Dorsolateral prefrontal cortex (tissue), 120 donors: ENCODE measurements at regions of chr18 and their contacts with region 1.

Region 1: DNA sequence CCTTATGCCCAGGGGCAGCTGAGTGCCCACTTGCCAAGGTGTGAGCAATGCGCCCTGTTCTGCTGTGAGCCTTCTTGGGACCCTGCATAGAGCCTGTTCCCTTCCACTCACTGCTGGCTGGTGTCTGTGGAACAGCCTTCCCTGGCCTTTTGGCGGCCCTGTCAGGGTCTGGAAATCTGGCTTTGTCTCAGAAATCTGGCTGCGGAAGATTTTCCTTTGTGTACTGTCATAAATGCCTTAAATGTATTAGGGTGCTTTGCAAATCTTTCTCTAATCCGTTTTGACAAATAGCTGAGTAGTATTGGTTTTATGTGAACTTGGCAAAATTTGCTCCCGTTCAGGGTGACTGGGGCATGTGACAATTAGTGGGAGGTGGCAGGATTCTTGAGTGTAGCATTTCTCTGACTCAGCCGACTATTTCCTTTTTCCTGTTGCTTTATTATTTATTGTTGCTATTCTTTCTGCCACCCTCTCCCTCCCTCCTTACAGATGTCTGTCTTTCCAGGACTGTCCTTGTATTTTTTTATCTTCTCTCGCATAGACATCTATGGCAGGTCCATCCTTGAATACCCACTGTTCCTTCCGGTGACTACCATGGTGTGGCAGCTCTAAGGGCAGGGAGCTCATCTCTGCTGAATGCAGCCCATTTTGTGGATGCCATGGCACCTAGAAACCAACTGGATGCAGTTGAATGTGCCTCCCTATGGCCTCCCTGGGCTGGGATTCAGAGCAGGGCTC is 41.8 kb downstream of the LDLRAD4 start:
- DNase-seq: peak in 1 of 10 donors; percentile 8
- H3K4me3 ChIP-seq: no peak overlapping the region
- H3K27ac ChIP-seq: peak overlapping the region in 22 of 59 donors; percentile 3 to 78 (median 32)
- H3K27me3 ChIP-seq: no peaks in the 10 kb centered on the region
- CTCF ChIP-seq: no peak

Region 2: GRCh38 chr18:12882453-12883371 is 377.7 kb before region 1 on chr18:
- intact Hi-C with region 1: no loop called
- DNase-seq: no peak
- H3K4me3 ChIP-seq: peak overlapping the region; percentile 66 to 99 (median 85)
- H3K27ac ChIP-seq: peak overlapping the region; percentile 94 to 100 (median 100)
- H3K27me3 ChIP-seq: no peaks in the 10 kb centered on the region
- CTCF ChIP-seq: no peak

Region 3: DNA sequence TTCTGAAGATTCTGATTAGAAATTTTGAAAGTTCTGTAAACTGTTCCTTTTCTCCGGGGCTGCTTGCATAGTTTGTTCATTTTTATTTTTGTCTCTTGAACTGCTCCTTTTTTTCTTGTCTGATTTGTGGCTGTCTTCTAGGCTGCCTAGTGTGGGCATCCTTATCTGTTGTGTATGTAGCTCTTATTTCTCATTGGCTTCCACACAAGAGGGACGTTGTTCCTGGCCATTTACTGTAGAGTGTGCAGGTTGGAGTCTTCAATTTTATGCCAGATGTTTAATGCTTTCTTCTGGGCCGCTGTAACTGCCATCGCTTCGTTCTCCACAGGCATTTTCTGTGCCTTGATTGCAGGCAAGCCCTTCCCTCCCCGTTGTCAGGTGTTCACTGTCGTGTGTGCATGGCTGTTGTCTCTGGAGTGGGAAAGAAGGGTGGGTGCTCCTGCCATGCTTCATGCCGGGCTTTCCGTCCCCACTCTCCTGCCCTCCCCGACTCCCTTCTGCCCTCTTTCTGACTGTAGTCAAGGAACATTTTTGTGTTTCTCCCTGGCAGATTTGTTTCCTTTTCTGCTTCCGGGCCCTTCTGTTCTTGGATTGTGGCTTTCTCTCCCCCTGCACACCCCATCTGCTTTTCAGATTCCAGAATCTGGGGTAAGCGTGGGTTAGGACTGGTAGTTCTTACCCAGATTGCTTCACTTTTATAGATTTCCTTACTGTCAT is 253.7 kb before region 1 on chr18:
- intact Hi-C with region 1: no loop called
- DNase-seq: peak in 2 of 10 donors; percentile 30 to 38
- H3K4me3 ChIP-seq: peak overlapping the region in 3 of 59 donors; percentile 13 to 23 (median 14)
- H3K27ac ChIP-seq: peak overlapping the region in 34 of 59 donors; percentile 1 to 68 (median 39)
- H3K27me3 ChIP-seq: no peaks in the 10 kb centered on the region
- CTCF ChIP-seq: no peak

Region 4: DNA sequence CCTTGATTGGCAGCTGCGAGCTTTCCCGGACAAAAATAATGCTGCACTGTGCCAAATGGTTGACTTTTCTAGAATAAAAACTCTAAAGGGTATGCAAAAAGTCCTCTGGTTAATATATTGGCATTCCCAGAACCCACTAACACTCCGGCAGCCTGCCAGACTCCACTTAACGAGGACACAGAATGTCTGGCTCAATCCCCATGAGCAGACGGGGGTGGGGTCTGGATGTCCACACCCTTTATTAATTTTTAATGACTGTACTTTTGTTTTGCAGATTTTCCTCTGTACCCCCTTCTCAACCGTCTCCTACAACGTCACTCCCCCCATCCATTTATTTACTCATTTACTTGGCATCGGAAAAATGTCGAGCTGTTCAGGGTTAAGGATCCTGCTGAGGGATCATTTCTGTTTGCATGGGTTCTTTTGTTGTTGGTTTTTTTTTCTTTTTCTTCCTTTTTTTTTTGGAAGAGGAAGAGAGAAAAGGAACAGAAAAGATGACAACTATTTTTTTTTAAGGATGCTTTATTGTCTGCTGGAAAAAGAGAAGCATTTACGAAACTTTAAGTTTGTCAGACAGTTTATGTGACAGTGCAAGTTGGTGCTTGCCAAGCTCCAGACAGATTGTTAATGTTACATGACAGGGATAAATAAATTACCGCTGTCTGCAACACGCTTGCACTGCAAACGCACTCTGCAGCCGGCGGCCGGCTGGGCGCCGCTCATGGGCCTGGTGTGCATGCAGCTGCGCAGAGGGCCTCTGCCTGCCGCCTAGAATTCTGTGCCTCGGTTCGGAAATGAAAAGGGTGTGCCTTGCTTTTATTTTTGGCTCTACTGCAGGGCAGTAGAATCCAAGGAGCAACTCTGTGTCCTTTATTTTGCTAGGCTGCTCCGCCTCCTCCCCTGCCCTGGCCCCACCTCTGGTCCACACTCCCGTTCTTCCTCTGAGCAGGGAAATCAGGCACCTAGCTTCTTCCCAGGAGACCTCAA is 38.2 kb before region 1 on chr18:
- intact Hi-C with region 1: loop called in 1 of 2 experiments (anchors 5 kb)
- DNase-seq: peak in 5 of 10 donors; percentile 51 to 71 (median 56)
- H3K4me3 ChIP-seq: peak overlapping the region in 57 of 59 donors; percentile 5 to 92 (median 31)
- H3K27ac ChIP-seq: peak overlapping the region in 56 of 59 donors; percentile 2 to 89 (median 68)
- H3K27me3 ChIP-seq: no peaks in the 10 kb centered on the region
- CTCF ChIP-seq: peak in 3 of 56 donors; percentile 8 to 11 (median 9)